IMR-90 (cell line): ENCODE measurements at regions of chr7 and their contacts with region 1.

Region 1: DNA sequence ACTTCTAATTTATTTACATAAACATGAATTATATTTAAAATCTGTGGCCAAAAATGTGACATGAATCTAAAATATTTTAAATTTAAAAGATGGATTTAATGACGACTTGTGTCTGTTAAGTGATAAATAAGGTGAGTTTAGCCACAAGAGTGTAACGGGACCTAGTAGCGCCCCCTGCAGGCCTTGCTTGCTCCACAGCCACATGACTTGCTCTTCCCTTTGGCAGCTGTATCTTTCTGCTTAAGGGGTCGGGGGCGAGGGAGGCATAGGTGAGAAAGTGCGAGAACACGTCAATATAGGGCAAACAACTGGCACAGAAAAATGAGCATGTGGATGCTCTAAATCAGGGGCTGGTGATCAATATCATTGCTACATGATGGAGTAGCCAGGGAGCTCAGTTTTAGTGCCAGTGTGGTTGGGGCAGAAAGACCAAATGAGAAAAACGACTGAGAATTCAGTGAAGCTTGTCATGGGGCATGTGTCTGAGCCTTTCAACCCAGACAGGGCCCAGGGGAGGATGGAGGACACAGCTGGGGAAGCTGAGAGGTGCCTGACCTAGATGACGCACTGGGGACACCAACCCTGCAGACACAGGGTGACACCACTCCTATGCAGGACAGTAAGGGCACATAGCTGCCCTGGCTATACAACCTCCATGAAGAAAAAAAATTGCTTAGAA is 49.8 kb downstream of the PAXIP1 start:
- DNase-seq: peak; percentile 29
- ATAC-seq: peak; percentile 53; the same call in 1 of the 2 replicates
- H3K4me3 ChIP-seq: no peak overlapping the region
- H3K27ac ChIP-seq: no peak overlapping the region
- H3K4me1 ChIP-seq: no peaks in the 10 kb centered on the region
- H3K27me3 ChIP-seq: no peaks in the 10 kb centered on the region
- CTCF ChIP-seq: peak; percentile 51
- POLR2A ChIP-seq: no peak
- RAD21 ChIP-seq: peak; percentile 22; the same call in 1 of the 2 replicates

Region 2: DNA sequence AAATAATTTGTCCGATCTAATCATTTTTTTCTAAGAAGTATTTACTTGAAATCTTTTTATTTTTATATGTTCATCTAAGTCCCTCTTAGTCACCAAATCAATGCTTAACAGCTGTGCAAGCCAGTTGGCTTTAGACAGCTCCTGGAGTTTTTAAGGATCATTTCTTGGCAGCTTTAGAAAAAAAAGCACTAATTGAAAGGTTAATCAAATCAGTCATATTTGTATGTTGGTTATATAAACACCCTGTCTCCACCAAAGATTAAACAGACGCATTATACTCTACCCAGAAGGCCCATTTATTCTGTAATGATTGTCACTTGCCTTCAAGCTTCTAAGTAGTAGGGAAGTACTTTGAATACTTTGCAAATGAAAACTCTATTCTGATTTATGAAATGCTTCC is 10.5 kb before region 1 on chr7:
- CTCF ChIA-PET with region 1: interaction called, 15 read pairs
- POLR2A ChIA-PET with region 1: no interaction called
- dilution Hi-C with region 1: no loop called
- in situ Hi-C with region 1: no loop called
- intact Hi-C with region 1: no loop called
- DNase-seq: no peak
- ATAC-seq: no peak
- H3K4me3 ChIP-seq: no peak overlapping the region
- H3K27ac ChIP-seq: no peak overlapping the region
- H3K4me1 ChIP-seq: no peaks in the 10 kb centered on the region
- H3K27me3 ChIP-seq: no peaks in the 10 kb centered on the region
- CTCF ChIP-seq: no peak
- POLR2A ChIP-seq: no peak
- RAD21 ChIP-seq: no peak